HEK293 (cell line): ENCODE measurements at regions of chr5 and their contacts with region 1.

Region 1: GRCh38 chr5:76867827-76868693 is 18.2 kb downstream of the S100Z start:
- H3K4me3 ChIP-seq: no peak overlapping the region
- H3K27ac ChIP-seq: no peak overlapping the region
- H3K4me1 ChIP-seq: no peaks in the 10 kb centered on the region
- CTCF ChIP-seq: peak; percentile 49

Region 2: DNA sequence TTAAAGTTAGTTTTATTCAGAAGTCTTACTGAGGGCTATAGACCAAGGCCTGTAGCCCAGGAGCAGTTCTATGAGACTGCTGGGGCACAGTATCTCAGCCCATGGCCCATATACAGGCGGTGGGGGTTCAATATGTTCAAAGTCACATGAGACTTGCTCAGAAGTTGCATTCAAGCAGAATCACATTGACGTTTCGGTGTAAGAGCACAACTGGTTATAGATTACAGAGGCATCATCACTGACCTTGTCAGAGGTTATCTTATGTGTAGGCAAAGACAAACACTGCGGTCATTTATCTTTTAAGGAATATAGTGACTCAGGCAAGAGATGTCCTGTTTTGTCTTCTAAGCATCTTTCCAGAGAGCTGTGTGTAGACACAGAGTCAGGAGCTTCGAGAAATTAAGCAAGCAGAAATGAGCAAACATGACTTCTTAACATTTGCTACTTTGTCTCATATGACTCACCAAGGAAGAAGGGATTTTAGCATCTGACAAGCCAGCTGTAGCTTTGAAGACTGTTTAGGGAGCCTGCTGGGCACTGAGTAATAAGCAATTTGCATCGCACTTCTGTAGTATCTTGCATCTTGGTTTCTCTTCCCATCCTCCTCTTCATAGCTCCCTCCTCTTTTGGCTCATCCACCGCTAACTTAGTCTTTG is 62.1 kb before region 1 on chr5:
- CTCF ChIA-PET with region 1: no interaction called
- POLR2A ChIA-PET with region 1: no interaction called
- H3K4me3 ChIP-seq: no peak overlapping the region
- H3K27ac ChIP-seq: no peak overlapping the region; the same call in 1 of the 2 replicates
- H3K4me1 ChIP-seq: peaks cover 2% of the 10 kb centered on the region
- CTCF ChIP-seq: no peak

Region 3: GRCh38 chr5:77015938-77016569 is 148.0 kb after region 1 on chr5:
- CTCF ChIA-PET with region 1: interaction called, 61 read pairs
- POLR2A ChIA-PET with region 1: no interaction called
- H3K4me3 ChIP-seq: no peak overlapping the region
- H3K27ac ChIP-seq: no peak overlapping the region
- H3K4me1 ChIP-seq: no peaks in the 10 kb centered on the region
- CTCF ChIP-seq: 0 out of 2 replicates have a peak, but pooled peaks have one; percentile 23

Region 4: GRCh38 chr5:77076961-77077823 is 209.1 kb after region 1 on chr5:
- CTCF ChIA-PET with region 1: interaction called, 24 read pairs
- POLR2A ChIA-PET with region 1: no interaction called
- H3K4me3 ChIP-seq: peak overlapping the region; percentile 34
- H3K27ac ChIP-seq: peak overlapping the region; percentile 85
- H3K4me1 ChIP-seq: peaks cover 3% of the 10 kb centered on the region
- CTCF ChIP-seq: no peak

Region 5: DNA sequence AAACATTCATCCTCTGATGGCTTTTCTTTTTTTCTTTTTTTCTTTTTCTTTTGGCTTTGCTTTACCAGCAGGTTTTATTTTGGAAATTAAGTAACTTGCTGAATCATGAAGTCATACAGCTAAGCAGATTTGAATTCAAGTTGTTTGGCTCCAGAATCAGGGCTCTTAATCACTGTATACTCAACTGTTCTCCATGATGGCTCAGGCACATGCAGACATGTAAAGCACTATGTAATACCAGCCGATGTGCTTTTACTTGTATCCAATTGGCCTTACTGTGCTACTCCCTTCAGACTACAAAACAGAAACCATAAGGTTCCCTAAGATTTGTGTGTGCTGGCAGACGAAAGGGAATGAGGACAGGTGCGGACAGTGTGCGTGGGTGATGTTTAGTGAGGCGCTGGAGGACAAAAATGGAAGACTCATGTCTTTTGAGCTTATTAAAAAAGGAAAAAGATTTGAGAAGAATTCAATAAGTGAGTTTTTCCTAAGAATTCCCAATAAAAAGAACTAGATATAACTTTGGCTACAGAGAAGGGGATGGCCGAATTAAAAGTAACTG is 815.2 kb after region 1 on chr5:
- CTCF ChIA-PET with region 1: interaction called, 12 read pairs
- POLR2A ChIA-PET with region 1: no interaction called
- H3K4me3 ChIP-seq: no peak overlapping the region
- H3K27ac ChIP-seq: no peak overlapping the region
- H3K4me1 ChIP-seq: no peaks in the 10 kb centered on the region
- CTCF ChIP-seq: no peak